Activated naive CD4-positive, alpha-beta T cell treated with anti-CD3 and anti-CD28 coated beads, Interleukin-2, amount 10 ng/mL, durations not matched to agents 7 days and 5 days (primary cell): ENCODE measurements at regions of chr11 and their contacts with region 1.

Region 1: GRCh38 chr11:11966826-11967668 is 41.4 kb downstream of the DKK3 start:
- DNase-seq: peak; percentile 86
- H3K4me3 Mint-ChIP-seq: no peak overlapping the region
- H3K27ac Mint-ChIP-seq: no peak overlapping the region
- H3K4me1 Mint-ChIP-seq: peaks cover 5% of the 10 kb centered on the region
- H3K27me3 Mint-ChIP-seq: peaks cover 43% of the 10 kb centered on the region

Region 2: GRCh38 chr11:11782532-11783110 is 184.4 kb before region 1 on chr11:
- CTCF ChIA-PET with region 1: no interaction called
- DNase-seq: no peak
- H3K4me3 Mint-ChIP-seq: no peak overlapping the region
- H3K27ac Mint-ChIP-seq: no peak overlapping the region
- H3K4me1 Mint-ChIP-seq: no peaks in the 10 kb centered on the region
- H3K27me3 Mint-ChIP-seq: peaks cover 11% of the 10 kb centered on the region

Region 3: GRCh38 chr11:11876458-11876857 is 90.6 kb before region 1 on chr11:
- CTCF ChIA-PET with region 1: no interaction called
- DNase-seq: no peak
- H3K4me3 Mint-ChIP-seq: no peak overlapping the region
- H3K27ac Mint-ChIP-seq: no peak overlapping the region
- H3K4me1 Mint-ChIP-seq: peaks cover 14% of the 10 kb centered on the region
- H3K27me3 Mint-ChIP-seq: no peaks in the 10 kb centered on the region

Region 4: GRCh38 chr11:11977206-11977938 is 10.3 kb after region 1 on chr11:
- CTCF ChIA-PET with region 1: interaction called, 13 read pairs
- DNase-seq: no peak
- H3K4me3 Mint-ChIP-seq: no peak overlapping the region
- H3K27ac Mint-ChIP-seq: no peak overlapping the region
- H3K4me1 Mint-ChIP-seq: peaks cover 12% of the 10 kb centered on the region
- H3K27me3 Mint-ChIP-seq: peaks cover 36% of the 10 kb centered on the region

Region 5: DNA sequence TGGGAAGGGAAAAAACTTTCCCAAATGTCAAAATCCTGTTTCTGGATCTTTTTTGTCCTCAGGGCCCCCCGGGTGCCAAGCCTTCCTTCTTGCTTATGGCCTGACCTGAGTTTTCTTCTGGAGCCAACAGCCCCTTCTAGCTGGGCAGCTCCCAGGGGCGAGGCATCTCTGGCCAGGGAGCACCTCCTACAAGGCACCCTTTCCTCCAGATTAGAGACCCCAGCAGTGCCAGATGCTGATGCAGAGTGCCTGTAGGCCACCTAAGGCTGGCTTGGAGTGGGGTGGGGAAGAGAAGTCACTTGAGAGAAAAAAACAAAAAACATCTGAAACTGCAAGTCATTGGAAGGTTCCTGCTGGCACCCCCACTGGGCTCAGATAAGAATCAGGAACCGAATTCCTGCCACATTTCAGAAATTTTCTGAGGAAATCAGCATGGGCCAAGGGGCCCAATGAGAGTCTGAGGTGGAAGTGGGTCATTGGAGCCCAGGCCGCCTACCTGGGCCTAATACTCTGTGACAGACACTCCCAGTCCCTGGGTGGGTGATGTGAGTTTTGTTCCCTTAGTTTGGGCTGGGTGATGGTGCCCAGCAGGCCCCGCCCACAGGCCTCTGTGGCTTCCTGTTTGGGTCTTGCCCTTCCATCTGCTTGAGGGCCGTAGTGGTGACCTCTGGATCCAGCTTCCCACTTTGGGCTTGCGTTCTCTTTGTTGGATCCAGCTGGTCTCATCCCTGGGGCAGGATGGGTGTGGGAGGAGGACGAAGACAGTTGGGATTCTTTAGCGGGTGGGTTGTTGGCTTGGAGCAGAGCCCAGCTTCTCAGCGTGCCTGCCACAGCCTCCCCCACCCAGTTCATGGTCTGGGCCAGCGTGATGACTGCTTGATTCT is 450.9 kb after region 1 on chr11:
- CTCF ChIA-PET with region 1: no interaction called
- DNase-seq: no peak
- H3K4me3 Mint-ChIP-seq: no peak overlapping the region
- H3K27ac Mint-ChIP-seq: no peak overlapping the region
- H3K4me1 Mint-ChIP-seq: peaks cover 2% of the 10 kb centered on the region
- H3K27me3 Mint-ChIP-seq: peaks cover 16% of the 10 kb centered on the region